Posterior vena cava (tissue), 2 donors: ENCODE measurements at regions of chr4 and their contacts with region 1.

Region 1: GRCh38 chr4:124449881-124450280 is 262.7 kb downstream of the ANKRD50 start:
- DNase-seq: no peak

Region 2: GRCh38 chr4:123599920-123600810 is 849.7 kb before region 1 on chr4:
- intact Hi-C with region 1: loop called in 1 of 2 experiments (anchors 10 kb)
- DNase-seq: peak; percentile 85